Activated CD4-positive, alpha-beta T cell treated with anti-CD3 and anti-CD28 coated beads, Interleukin-2, amount 10 ng/mL, durations not matched to agents 24 days and 14 days (primary cell): ENCODE measurements at regions of chr11 and their contacts with region 1.

Region 1: GRCh38 chr11:95680169-95680929 is 109.2 kb downstream of the FAM76B start:
- DNase-seq: no peak
- H3K4me3 Mint-ChIP-seq: peak overlapping the region; percentile 55
- H3K27ac Mint-ChIP-seq: peak overlapping the region; percentile 76
- H3K4me1 Mint-ChIP-seq: peaks cover 82% of the 10 kb centered on the region
- H3K27me3 Mint-ChIP-seq: no peaks in the 10 kb centered on the region

Region 2: DNA sequence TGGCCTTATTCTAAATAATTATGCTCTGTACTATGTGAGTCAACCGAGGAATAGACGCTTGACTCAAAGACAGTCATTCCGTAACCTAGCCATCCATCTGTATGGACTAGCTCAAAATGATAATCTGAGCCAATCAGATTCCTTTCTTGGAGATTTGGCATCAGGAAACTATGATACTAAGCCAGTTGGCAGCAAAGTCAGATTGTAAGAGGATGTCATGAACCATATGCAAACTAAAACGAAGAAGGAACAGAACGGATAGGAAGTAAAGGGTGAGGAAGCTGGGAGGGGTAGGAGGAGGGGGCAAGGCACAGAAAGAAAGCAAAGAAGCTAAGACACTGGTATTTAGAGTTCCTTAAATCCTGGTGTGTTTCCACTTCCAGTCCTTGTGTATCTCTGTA is 438.7 kb before region 1 on chr11:
- intact Hi-C with region 1: no loop called
- DNase-seq: no peak
- H3K4me3 Mint-ChIP-seq: no peak overlapping the region
- H3K27ac Mint-ChIP-seq: no peak overlapping the region
- H3K4me1 Mint-ChIP-seq: peaks cover 3% of the 10 kb centered on the region
- H3K27me3 Mint-ChIP-seq: no peaks in the 10 kb centered on the region

Region 3: GRCh38 chr11:95337175-95337957 is 343.0 kb before region 1 on chr11:
- intact Hi-C with region 1: loop called (anchors 5 kb)
- DNase-seq: peak; percentile 90
- H3K4me3 Mint-ChIP-seq: no peak overlapping the region
- H3K27ac Mint-ChIP-seq: no peak overlapping the region
- H3K4me1 Mint-ChIP-seq: peaks cover 10% of the 10 kb centered on the region
- H3K27me3 Mint-ChIP-seq: peaks cover 2% of the 10 kb centered on the region

Region 4: GRCh38 chr11:95584589-95584988 is 95.8 kb before region 1 on chr11:
- intact Hi-C with region 1: loop called (anchors 1 kb)
- DNase-seq: peak; percentile 32
- H3K4me3 Mint-ChIP-seq: no peak overlapping the region
- H3K27ac Mint-ChIP-seq: no peak overlapping the region
- H3K4me1 Mint-ChIP-seq: peaks cover 20% of the 10 kb centered on the region
- H3K27me3 Mint-ChIP-seq: no peaks in the 10 kb centered on the region

Region 5: DNA sequence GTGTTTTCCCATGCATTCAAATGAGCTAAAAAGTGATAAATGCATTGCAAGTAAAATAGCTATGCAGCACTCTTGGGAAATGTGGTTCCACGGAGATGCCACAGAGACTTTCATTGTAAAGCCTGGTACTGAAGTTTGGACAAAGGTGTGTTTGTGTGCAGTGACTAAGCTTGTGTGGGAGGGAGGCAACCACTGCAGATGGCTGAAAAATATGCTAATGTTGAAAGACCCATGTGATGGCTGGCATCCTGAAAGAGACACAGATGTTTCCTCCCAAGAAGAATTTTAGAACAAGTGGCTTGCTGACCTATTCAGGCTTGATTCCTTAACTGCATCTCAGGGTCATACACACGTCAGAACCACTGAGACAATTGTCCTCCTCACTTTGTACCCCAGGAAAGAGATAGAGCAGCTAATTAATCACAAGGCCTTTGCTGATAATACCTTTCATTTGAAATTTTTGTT is 35.5 kb after region 1 on chr11:
- intact Hi-C with region 1: loop called (anchors 1 kb)
- DNase-seq: peak; percentile 73
- H3K4me3 Mint-ChIP-seq: peak overlapping the region; percentile 57
- H3K27ac Mint-ChIP-seq: peak overlapping the region; percentile 84
- H3K4me1 Mint-ChIP-seq: peaks cover 45% of the 10 kb centered on the region
- H3K27me3 Mint-ChIP-seq: no peaks in the 10 kb centered on the region

Region 6: DNA sequence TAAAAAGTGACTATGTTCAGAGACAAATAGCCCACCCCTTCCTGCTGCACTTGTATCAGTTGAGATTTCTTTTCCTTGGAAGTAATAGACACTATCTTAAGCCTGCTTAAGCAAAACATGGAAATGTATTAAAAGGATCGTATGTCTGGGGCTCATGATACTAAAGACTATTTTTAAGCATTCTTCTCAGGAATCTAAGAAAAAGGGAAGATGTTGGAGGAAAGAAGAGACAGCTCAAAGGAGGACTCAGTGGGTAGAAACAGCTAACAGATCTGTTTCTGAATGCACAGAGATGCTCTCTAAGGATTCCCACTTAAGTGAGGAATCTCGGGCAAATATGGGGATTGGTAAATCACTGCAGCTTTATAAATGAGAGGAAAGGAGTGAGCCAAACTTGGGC is 46.8 kb after region 1 on chr11:
- intact Hi-C with region 1: no loop called
- DNase-seq: no peak
- H3K4me3 Mint-ChIP-seq: no peak overlapping the region
- H3K27ac Mint-ChIP-seq: no peak overlapping the region
- H3K4me1 Mint-ChIP-seq: no peaks in the 10 kb centered on the region
- H3K27me3 Mint-ChIP-seq: peaks cover 13% of the 10 kb centered on the region